Naive thymus-derived CD4-positive, alpha-beta T cell (primary cell): ENCODE measurements at regions of chr16 and their contacts with region 1.

Region 1: DNA sequence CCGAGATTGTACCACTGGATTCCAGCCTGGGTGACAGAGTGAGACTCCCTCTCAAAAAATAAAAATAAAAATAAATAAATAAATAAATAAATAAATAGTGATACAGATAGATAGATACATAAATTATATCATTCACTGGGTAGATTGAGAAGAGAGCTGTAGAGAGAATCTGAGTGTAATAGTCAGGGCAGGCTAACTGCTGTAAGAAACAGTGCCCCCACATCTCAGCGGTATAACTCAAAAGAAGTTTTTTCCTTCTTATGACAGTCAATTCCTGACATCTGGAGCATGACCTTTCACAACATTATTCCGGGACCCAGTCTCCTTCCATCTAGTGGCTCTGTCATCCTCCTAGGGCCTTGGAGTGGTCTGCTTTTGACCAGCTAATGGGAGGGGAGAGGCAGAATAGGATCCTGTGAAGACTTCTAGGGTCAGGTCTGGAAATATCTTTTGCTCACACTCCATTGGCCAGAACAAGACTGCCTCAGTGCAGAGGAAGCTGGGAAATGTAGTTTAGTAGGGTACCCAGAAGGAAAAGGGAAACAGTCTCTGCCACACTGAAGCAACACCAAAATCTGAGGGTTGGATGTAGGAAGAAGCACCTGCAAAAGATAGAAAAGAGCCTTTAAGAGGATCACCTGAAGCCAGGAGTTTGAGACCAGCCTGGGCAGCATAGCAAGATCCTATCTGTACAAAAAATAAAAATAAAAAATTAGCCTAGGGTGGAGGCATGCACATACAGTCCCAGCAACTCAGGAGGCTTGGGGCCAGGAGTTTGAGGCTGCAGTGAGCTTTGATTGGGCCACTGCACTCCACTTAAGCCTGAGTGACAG is 3.0 kb upstream of the QPRT start:
- DNase-seq: peak in 5 of 9 donors; percentile 28 to 40 (median 34)
- ATAC-seq: peak; percentile 61
- H3K4me3 ChIP-seq: no peak overlapping the region
- H3K4me3 Mint-ChIP-seq: no peak overlapping the region
- H3K27ac ChIP-seq: peak overlapping the region; percentile 31
- H3K27ac Mint-ChIP-seq: peak overlapping the region; percentile 10 to 82 (median 70)
- H3K4me1 ChIP-seq: peaks cover 0 to 12% of the 10 kb centered on the region in 2 donors
- H3K4me1 Mint-ChIP-seq: peaks cover 10 to 32% (median 25%) of the 10 kb centered on the region in 7 donors
- H3K27me3 ChIP-seq: no peaks in the 10 kb centered on the region
- H3K27me3 Mint-ChIP-seq: no peaks in the 10 kb centered on the region

Region 2: GRCh38 chr16:29664091-29664921 is 11.7 kb before region 1 on chr16:
- CTCF ChIA-PET with region 1: interaction called, 7 read pairs
- POLR2A ChIA-PET with region 1: interaction called, 16 read pairs
- intact Hi-C with region 1: loop called (anchors 1 kb)
- DNase-seq: peak in 8 of 9 donors; percentile 33 to 60 (median 48)
- ATAC-seq: peak; percentile 43
- H3K4me3 ChIP-seq: peak overlapping the region; percentile 95
- H3K4me3 Mint-ChIP-seq: peak overlapping the region; percentile 91 to 99 (median 98)
- H3K27ac ChIP-seq: peak overlapping the region; percentile 94
- H3K27ac Mint-ChIP-seq: peak overlapping the region; percentile 90 to 99 (median 98)
- H3K4me1 ChIP-seq: peaks cover 36 to 45% of the 10 kb centered on the region in 2 donors
- H3K4me1 Mint-ChIP-seq: peaks cover 39 to 70% (median 57%) of the 10 kb centered on the region in 7 donors
- H3K27me3 ChIP-seq: no peaks in the 10 kb centered on the region
- H3K27me3 Mint-ChIP-seq: no peaks in the 10 kb centered on the region